ENCODE measurements at regions of chr6 and their contacts with region 1.

Region 1: GRCh38 chr6:30914076-30914853 is at the start of gene VARS2:
- DNase-seq: peak; percentile 80 to 95 (median 86)
- ATAC-seq: peak; percentile 98
- H3K4me3 ChIP-seq: peak within 1 kb of the TSS; percentile 64
- H3K4me3 Mint-ChIP-seq: peak within 1 kb of the TSS; percentile 87 to 96 (median 92)
- H3K27ac ChIP-seq: peak within 1 kb of the TSS; percentile 78
- H3K27ac Mint-ChIP-seq: peak within 1 kb of the TSS; percentile 81 to 93 (median 88)
- H3K4me1 ChIP-seq: peaks cover 13 to 17% of the 10 kb centered on the region in 2 donors
- H3K4me1 Mint-ChIP-seq: peaks cover 20 to 51% (median 40%) of the 10 kb centered on the region in 7 donors
- H3K27me3 ChIP-seq: no peaks in the 10 kb centered on the region
- H3K27me3 Mint-ChIP-seq: no peaks in the 10 kb centered on the region
- total RNA-seq, gene VARS2: 22.2 to 47.3 (median 37.9) TPM

Region 2: DNA sequence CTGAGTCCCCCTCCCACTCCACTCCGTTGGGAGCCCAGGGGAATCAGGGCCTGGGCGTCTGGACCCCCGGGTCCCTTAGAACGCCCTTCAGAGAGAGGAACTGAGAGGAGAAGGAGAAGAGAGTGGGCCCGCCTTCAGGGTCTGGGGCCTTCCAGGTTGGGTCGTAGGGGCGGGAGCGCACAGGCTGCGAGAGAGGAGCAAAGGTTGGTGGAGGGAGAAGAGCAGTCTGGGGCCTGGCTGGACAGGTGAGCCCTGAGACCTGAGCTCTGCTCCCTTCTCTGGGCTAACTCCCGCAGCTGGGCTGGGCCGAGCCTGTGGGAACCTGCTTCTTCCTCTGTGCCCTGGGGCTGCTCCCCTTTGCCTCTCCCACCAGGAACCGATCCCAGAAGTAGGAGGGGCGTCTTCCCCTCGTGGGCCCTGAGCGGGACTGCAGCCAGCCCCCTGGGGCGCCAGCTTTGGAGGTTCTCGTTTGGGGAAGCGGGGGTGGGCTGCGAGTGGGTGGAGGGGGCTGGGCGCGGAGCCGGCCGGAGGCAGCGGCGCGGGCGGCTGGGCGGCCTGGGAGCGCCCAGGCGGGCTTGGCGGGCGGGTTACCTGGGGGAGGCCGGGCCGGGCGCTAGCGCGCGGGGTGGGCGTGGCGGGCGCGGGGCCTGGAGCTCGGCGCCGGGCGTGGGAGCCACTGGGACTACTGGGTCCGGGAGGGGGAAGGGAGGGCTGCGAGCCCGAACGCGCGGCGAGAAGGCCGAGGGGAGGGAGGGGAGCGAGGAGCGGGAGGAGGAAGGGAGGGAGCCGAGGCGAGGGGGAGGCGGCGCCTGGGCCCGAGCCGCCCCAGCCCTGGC is 30.4 kb before region 1 on chr6 and contains the start of gene DDR1:
- CTCF ChIA-PET with region 1: interaction called, 3 read pairs
- POLR2A ChIA-PET with region 1: interaction called, 4 read pairs
- intact Hi-C with region 1: loop called (anchors 1 to 2 kb)
- DNase-seq: peak in 6 of 9 donors; percentile 17 to 42 (median 24)
- ATAC-seq: peak; percentile 66
- H3K4me3 ChIP-seq: peak within 1 kb of the TSS; percentile 68
- H3K4me3 Mint-ChIP-seq: peak within 1 kb of the TSS; percentile 73 to 91 (median 82)
- H3K27ac ChIP-seq: peak within 1 kb of the TSS; percentile 70
- H3K27ac Mint-ChIP-seq: peak within 1 kb of the TSS; percentile 53 to 93 (median 89)
- H3K4me1 ChIP-seq: peaks cover 12 to 35% of the 10 kb centered on the region in 2 donors
- H3K4me1 Mint-ChIP-seq: peaks cover 25 to 53% (median 32%) of the 10 kb centered on the region in 7 donors
- H3K27me3 ChIP-seq: no peaks in the 10 kb centered on the region
- H3K27me3 Mint-ChIP-seq: peaks cover 0 to 7% (median 0%) of the 10 kb centered on the region in 5 donors
- total RNA-seq, gene DDR1: 13.7 to 23.8 (median 18.6) TPM

Region 3: DNA sequence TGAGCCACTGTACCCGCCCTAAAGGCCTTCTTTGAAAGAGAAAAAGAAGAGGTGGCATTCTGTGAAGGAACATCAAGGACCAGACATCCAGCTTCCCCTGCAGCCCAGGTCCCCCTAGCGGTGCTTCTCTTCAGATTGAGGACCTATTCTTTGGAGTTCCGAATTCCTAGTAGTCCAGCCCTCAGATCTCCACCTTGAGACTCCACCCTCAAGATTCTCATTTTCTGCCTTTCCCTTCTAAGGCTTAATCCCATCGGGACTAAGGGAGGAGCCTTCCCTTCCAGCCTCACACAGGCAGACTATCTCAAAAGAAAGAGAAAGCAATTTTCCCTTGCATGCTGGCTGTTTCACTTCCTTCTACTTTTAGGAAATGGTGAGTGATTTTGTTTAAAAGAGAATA is 128.5 kb after region 1 on chr6:
- CTCF ChIA-PET with region 1: interaction called, 5 read pairs
- POLR2A ChIA-PET with region 1: no interaction called
- intact Hi-C with region 1: loop called (anchors 1 kb)
- DNase-seq: peak in 6 of 9 donors; percentile 6 to 37 (median 15)
- ATAC-seq: peak; percentile 57
- H3K4me3 ChIP-seq: no peak overlapping the region
- H3K4me3 Mint-ChIP-seq: peak overlapping the region in 5 of 10 donors; percentile 24 to 69 (median 57)
- H3K27ac ChIP-seq: no peak overlapping the region
- H3K27ac Mint-ChIP-seq: no peak overlapping the region
- H3K4me1 ChIP-seq: no peaks in the 10 kb centered on the region
- H3K4me1 Mint-ChIP-seq: peaks cover 0 to 11% (median 3%) of the 10 kb centered on the region in 7 donors
- H3K27me3 ChIP-seq: no peaks in the 10 kb centered on the region
- H3K27me3 Mint-ChIP-seq: peaks cover 1 to 33% (median 16%) of the 10 kb centered on the region in 5 donors

Region 4: DNA sequence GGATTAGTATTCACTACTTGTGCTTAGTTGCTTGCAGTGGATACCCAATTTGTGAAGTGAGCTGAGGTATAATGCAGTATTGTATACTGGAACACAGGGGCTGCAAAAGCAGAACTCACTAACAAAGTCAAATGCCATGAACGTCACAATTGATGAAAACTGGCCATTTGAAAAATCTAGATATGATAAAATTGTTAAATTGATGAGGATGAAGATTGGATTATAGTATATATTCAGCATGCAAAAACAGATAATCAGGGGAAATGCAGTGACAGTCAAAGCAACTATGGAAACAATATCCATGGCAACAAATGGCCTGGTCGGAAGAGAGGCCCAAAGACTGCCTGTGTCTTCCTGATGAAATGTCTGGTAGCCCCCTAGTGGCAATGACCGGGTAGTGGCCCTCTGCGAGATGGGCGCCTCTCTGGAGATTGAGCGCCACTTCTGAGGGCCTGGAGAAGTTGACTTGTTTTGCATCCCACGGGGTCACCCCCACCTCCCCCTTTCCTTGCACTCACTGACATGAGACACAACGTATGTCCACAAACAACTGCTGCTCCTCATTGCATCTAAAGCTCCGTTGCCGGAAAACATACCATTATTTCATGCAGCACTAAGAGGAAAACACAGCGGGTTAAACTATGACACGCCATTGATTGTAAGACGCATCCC is 154.5 kb after region 1 on chr6:
- CTCF ChIA-PET with region 1: interaction called, 15 read pairs
- POLR2A ChIA-PET with region 1: interaction called, 3 read pairs
- intact Hi-C with region 1: loop called (anchors 1 kb)
- DNase-seq: peak; percentile 45 to 73 (median 61)
- ATAC-seq: peak; percentile 96
- H3K4me3 ChIP-seq: no peak overlapping the region
- H3K4me3 Mint-ChIP-seq: no peak overlapping the region
- H3K27ac ChIP-seq: no peak overlapping the region
- H3K27ac Mint-ChIP-seq: peak overlapping the region in 1 of 9 donors; percentile 20
- H3K4me1 ChIP-seq: no peaks in the 10 kb centered on the region
- H3K4me1 Mint-ChIP-seq: peaks cover 0 to 7% (median 0%) of the 10 kb centered on the region in 7 donors
- H3K27me3 ChIP-seq: no peaks in the 10 kb centered on the region
- H3K27me3 Mint-ChIP-seq: peaks cover 0 to 2% (median 0%) of the 10 kb centered on the region in 5 donors

Region 5: GRCh38 chr6:31079656-31080261 is 165.5 kb after region 1 on chr6:
- CTCF ChIA-PET with region 1: interaction called, 28 read pairs
- POLR2A ChIA-PET with region 1: interaction called, 6 read pairs
- intact Hi-C with region 1: loop called (anchors 1 to 2 kb)
- DNase-seq: peak; percentile 34 to 77 (median 72)
- ATAC-seq: peak; percentile 93
- H3K4me3 ChIP-seq: peak overlapping the region; percentile 21
- H3K4me3 Mint-ChIP-seq: peak overlapping the region; percentile 37 to 81 (median 66)
- H3K27ac ChIP-seq: no peak overlapping the region
- H3K27ac Mint-ChIP-seq: peak overlapping the region in 4 of 9 donors; percentile 19 to 42 (median 28)
- H3K4me1 ChIP-seq: peaks cover 5 to 6% of the 10 kb centered on the region in 2 donors
- H3K4me1 Mint-ChIP-seq: peaks cover 6 to 9% (median 8%) of the 10 kb centered on the region in 7 donors
- H3K27me3 ChIP-seq: no peaks in the 10 kb centered on the region
- H3K27me3 Mint-ChIP-seq: peaks cover 0 to 26% (median 0%) of the 10 kb centered on the region in 5 donors

Region 6: DNA sequence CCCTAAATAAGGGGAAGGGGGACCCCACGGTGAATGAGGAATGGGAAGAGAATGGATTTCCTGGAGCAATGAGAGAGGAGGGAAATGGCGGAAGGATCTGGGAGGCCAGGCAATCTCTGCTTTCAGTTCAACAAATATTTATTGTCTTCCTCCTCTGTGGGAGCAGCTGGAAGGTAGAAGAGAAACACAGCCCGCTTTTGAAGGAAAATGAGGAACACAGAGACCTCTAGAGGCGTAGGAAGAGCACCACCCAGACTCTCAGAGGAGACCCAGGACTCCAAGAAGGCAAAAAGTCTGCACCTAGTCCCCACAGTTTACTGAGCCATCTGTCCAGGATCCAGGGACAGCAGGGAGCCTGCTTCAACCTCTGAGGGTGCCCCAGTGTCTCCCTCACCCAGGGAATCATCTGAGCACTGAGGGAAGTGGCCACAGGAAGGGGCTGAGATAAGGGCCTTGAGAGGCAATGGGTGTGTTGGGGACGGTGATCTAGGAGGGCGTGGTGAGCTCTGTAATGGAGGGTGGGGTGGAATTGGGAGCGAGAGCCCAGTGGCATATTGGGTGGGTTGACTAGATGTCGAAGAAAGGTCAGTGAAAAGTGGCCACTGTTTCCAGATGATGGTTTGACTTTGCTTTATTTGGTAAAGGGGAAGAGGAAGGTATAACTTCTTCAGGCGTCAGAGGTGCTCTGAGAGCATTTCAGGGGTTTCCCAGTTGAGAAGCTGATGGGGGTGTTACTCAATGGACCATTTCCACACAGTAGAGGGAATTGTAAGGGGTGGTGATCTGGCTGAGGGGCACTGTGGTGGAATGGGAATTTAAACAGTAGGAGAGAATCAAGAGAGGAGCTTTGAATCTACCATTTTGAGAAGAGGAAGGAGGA is 200.9 kb after region 1 on chr6:
- CTCF ChIA-PET with region 1: interaction called, 5 read pairs
- POLR2A ChIA-PET with region 1: no interaction called
- intact Hi-C with region 1: loop called in 1 of 2 experiments (anchors 1 kb)
- DNase-seq: peak in 3 of 9 donors; percentile 23 to 45 (median 23)
- ATAC-seq: no peak
- H3K4me3 ChIP-seq: no peak overlapping the region
- H3K4me3 Mint-ChIP-seq: peak overlapping the region in 2 of 10 donors; percentile 28 to 46
- H3K27ac ChIP-seq: no peak overlapping the region
- H3K27ac Mint-ChIP-seq: peak overlapping the region in 2 of 9 donors; percentile 32 to 76
- H3K4me1 ChIP-seq: no peaks in the 10 kb centered on the region
- H3K4me1 Mint-ChIP-seq: peaks cover 0 to 12% (median 5%) of the 10 kb centered on the region in 7 donors
- H3K27me3 ChIP-seq: no peaks in the 10 kb centered on the region
- H3K27me3 Mint-ChIP-seq: peaks cover 0 to 24% (median 9%) of the 10 kb centered on the region in 5 donors

Region 7: GRCh38 chr6:31128093-31128676 is 213.9 kb after region 1 on chr6:
- CTCF ChIA-PET with region 1: interaction called, 3 read pairs
- POLR2A ChIA-PET with region 1: no interaction called
- intact Hi-C with region 1: loop called in 1 of 2 experiments (anchors 1 kb)
- DNase-seq: peak; percentile 29 to 79 (median 55)
- ATAC-seq: peak; percentile 87
- H3K4me3 ChIP-seq: no peak overlapping the region
- H3K4me3 Mint-ChIP-seq: no peak overlapping the region
- H3K27ac ChIP-seq: no peak overlapping the region
- H3K27ac Mint-ChIP-seq: peak overlapping the region in 2 of 9 donors; percentile 0 to 1
- H3K4me1 ChIP-seq: no peaks in the 10 kb centered on the region
- H3K4me1 Mint-ChIP-seq: peaks cover 5 to 8% (median 6%) of the 10 kb centered on the region in 7 donors
- H3K27me3 ChIP-seq: no peaks in the 10 kb centered on the region
- H3K27me3 Mint-ChIP-seq: peaks cover 0 to 17% (median 5%) of the 10 kb centered on the region in 5 donors

Measured in naive thymus-derived CD4-positive, alpha-beta T cell (primary cell).